MCF 10A (cell line): ENCODE measurements at regions of chr6 and their contacts with region 1.

Region 1: DNA sequence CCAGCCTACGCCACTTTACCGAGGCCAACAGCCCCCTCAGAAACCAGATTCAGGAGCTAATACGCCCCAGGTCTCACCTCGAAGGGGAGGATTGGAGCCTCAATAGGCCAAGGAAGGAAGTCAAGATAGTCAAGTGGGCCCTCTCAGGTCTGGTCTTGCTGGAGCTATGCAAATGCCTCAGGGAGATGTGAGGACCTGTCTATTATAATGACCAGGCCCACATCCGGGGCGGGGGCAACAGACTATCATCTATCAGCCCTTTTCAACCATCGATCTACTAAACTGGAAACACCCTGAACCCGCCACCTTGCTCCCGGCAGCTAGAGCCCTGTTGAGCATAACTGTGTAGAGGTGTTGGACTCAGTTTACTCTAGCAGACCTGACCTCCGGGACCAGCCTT is 12.7 kb upstream of the GSTA3 start:
- DNase-seq: no peak
- H3K4me3 Mint-ChIP-seq: no peak overlapping the region
- H3K27ac Mint-ChIP-seq: no peak overlapping the region
- H3K4me1 Mint-ChIP-seq: peaks cover 21% of the 10 kb centered on the region
- H3K27me3 Mint-ChIP-seq: no peaks in the 10 kb centered on the region
- CTCF ChIP-seq: no peak

Region 2: DNA sequence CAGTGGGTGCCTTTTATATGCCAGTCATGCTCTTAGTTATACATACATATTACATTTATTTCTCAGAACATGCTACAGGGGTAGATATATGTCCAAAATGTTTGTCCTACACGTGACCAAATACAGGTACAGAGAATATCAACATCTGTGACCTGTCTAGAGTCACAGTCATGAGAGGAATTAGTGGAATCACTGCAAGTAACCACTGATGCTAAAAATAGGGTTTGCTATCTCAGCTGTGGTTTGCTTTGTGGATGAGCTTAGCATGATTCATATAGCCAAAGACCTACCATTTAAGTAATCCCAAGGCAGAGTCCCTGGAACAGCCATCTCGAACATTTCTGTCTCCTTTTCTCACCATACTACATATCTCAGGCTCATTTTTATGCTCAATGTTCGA is 45.0 kb before region 1 on chr6:
- CTCF ChIA-PET with region 1: interaction called, 3 read pairs
- POLR2A ChIA-PET with region 1: interaction called, 5 read pairs
- intact Hi-C with region 1: loop called (anchors 2 kb)
- DNase-seq: peak; percentile 61
- H3K4me3 Mint-ChIP-seq: no peak overlapping the region
- H3K27ac Mint-ChIP-seq: no peak overlapping the region
- H3K4me1 Mint-ChIP-seq: peaks cover 14% of the 10 kb centered on the region
- H3K27me3 Mint-ChIP-seq: peaks cover 46% of the 10 kb centered on the region
- CTCF ChIP-seq: no peak

Region 3: DNA sequence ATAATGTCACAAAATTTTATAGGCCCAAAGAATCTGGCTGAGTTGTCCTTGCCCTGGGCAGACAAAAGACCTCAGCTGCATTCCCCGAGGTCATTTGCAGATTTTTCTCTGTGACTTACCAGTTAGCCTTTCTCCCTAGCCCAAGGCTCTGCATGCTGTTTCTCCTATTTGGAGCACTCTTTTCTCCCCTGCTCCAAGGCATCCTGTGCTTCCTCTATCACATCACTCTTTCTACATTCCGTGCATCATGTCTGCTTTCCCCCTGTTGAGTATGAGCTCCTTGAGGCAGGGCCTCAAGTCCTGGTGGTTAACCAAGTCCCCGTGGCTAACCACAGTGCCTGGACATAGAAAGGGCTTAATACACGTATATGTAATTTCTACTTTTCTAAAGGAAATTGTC is 12.1 kb before region 1 on chr6:
- CTCF ChIA-PET with region 1: no interaction called
- POLR2A ChIA-PET with region 1: interaction called, 12 read pairs
- intact Hi-C with region 1: no loop called
- DNase-seq: no peak
- H3K4me3 Mint-ChIP-seq: no peak overlapping the region
- H3K27ac Mint-ChIP-seq: no peak overlapping the region
- H3K4me1 Mint-ChIP-seq: peaks cover 7% of the 10 kb centered on the region
- H3K27me3 Mint-ChIP-seq: no peaks in the 10 kb centered on the region
- CTCF ChIP-seq: no peak

Region 4: GRCh38 chr6:53263917-53264316 is 341.8 kb after region 1 on chr6:
- CTCF ChIA-PET with region 1: no interaction called
- POLR2A ChIA-PET with region 1: no interaction called
- intact Hi-C with region 1: no loop called
- DNase-seq: no peak
- H3K4me3 Mint-ChIP-seq: no peak overlapping the region
- H3K27ac Mint-ChIP-seq: no peak overlapping the region
- H3K4me1 Mint-ChIP-seq: no peaks in the 10 kb centered on the region
- H3K27me3 Mint-ChIP-seq: no peaks in the 10 kb centered on the region
- CTCF ChIP-seq: no peak